B cell (primary cell): ENCODE measurements at regions of chr9 and their contacts with region 1.

Region 1: DNA sequence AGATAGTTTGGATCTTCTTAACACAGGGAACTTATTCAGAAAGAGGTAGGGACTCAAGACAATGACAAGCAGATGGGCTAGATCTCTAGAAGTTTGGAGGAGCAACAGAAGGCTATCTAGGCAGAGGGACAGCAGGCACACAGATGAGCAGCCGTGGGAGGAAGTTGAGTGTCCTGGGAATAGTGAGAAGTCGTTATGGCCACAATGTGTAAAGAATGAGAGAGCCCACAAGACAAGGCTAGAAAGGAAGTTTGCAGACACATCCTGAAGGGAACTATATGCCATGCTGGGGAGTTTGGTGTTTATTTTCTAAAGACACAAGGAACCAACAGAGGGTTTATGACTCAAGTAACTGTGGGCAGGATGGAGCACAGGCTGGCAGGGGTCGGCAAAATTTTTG is 160.6 kb downstream of the PALM2AKAP2 start:
- DNase-seq: no peak
- ATAC-seq: no peak
- H3K4me3 ChIP-seq: no peak overlapping the region
- H3K4me3 Mint-ChIP-seq: no peak overlapping the region
- H3K27ac ChIP-seq: no peak overlapping the region
- H3K27ac Mint-ChIP-seq: no peak overlapping the region
- H3K4me1 ChIP-seq: peaks cover 13 to 20% of the 10 kb centered on the region in 2 donors
- H3K4me1 Mint-ChIP-seq: peaks cover 16% of the 10 kb centered on the region
- H3K27me3 ChIP-seq: no peaks in the 10 kb centered on the region
- H3K27me3 Mint-ChIP-seq: no peaks in the 10 kb centered on the region
- CTCF ChIP-seq: no peak

Region 2: DNA sequence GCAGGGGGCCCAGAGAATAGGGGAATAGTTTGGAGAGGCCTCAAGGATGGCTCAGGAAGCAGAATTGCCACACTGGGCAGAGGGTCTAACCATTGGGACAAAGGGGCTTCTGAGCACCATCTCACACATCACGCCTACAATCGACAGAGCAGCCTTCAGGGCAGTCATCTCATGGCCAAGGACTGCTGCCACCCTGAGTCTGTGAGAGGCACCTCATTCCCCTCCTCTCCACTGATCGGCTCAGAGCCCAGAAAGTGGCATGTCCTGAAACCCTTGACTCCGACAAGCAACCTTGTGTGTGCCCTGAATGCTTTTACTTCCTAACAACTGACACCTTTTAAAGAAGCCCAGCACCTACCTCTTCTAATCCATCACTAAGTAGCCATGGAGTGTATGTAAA is 313.5 kb before region 1 on chr9:
- CTCF ChIA-PET with region 1: no interaction called
- POLR2A ChIA-PET with region 1: no interaction called
- intact Hi-C with region 1: no loop called
- DNase-seq: no peak
- ATAC-seq: no peak
- H3K4me3 ChIP-seq: no peak overlapping the region
- H3K4me3 Mint-ChIP-seq: no peak overlapping the region
- H3K27ac ChIP-seq: no peak overlapping the region
- H3K27ac Mint-ChIP-seq: no peak overlapping the region
- H3K4me1 ChIP-seq: no peaks in the 10 kb centered on the region
- H3K4me1 Mint-ChIP-seq: no peaks in the 10 kb centered on the region
- H3K27me3 ChIP-seq: peaks cover 0 to 8% (median 1%) of the 10 kb centered on the region in 4 experiments
- H3K27me3 Mint-ChIP-seq: peaks cover 26% of the 10 kb centered on the region
- CTCF ChIP-seq: no peak

Region 3: DNA sequence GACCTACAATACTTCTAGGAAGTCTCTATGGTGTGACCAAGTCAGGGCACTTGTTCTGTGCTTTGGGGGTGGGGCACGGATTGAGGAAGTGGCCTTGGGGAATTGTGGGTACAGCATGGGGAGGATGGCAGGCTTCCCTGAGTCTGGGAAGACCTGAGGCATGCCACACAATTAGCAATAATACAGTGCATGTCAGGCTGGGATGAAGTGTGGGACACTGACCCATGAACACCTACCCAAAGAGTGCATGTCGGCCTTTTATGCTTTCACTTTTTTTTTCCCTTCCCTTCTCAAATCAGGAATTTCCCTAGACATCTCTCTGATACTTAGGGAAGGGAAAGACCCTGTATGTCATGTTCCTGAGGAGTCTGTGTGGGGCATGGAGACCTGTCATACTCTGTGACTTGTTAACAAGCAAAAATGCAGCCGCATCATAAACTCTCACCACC is 14.1 kb before region 1 on chr9:
- CTCF ChIA-PET with region 1: interaction called, 4 read pairs
- POLR2A ChIA-PET with region 1: no interaction called
- intact Hi-C with region 1: loop called (anchors 2 kb)
- DNase-seq: peak; percentile 43
- ATAC-seq: peak; percentile 60
- H3K4me3 ChIP-seq: peak overlapping the region in 3 of 5 experiments; percentile 8 to 29 (median 15)
- H3K4me3 Mint-ChIP-seq: peak overlapping the region; percentile 75
- H3K27ac ChIP-seq: no peak overlapping the region
- H3K27ac Mint-ChIP-seq: peak overlapping the region; percentile 73
- H3K4me1 ChIP-seq: peaks cover 25 to 29% of the 10 kb centered on the region in 2 donors
- H3K4me1 Mint-ChIP-seq: peaks cover 49% of the 10 kb centered on the region
- H3K27me3 ChIP-seq: no peaks in the 10 kb centered on the region
- H3K27me3 Mint-ChIP-seq: no peaks in the 10 kb centered on the region
- CTCF ChIP-seq: no peak

Region 4: DNA sequence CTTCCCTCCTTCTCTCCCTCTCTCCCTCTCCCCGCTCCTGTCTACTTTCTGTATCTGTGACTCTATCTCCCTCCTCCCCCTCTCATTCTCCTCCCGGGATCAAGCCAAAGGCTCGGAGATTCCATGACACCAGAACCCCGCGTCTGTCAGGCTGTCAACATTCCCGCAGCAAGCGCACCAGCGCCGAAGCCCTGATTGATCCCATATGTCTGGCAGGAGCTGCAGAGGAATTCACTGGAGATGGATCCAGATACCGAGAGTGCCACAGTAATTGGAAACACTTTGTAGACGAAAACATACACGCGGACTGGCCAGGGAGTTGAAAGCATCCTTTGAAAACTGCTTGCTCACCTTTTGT is 639.3 kb after region 1 on chr9:
- CTCF ChIA-PET with region 1: no interaction called
- POLR2A ChIA-PET with region 1: no interaction called
- intact Hi-C with region 1: no loop called
- DNase-seq: no peak
- ATAC-seq: no peak
- H3K4me3 ChIP-seq: no peak overlapping the region
- H3K4me3 Mint-ChIP-seq: no peak overlapping the region
- H3K27ac ChIP-seq: no peak overlapping the region
- H3K27ac Mint-ChIP-seq: no peak overlapping the region
- H3K4me1 ChIP-seq: no peaks in the 10 kb centered on the region
- H3K4me1 Mint-ChIP-seq: peaks cover 4% of the 10 kb centered on the region
- H3K27me3 ChIP-seq: peaks cover 0 to 14% (median 7%) of the 10 kb centered on the region in 4 experiments
- H3K27me3 Mint-ChIP-seq: peaks cover 40% of the 10 kb centered on the region
- CTCF ChIP-seq: no peak